GM18951 (cell line): ENCODE measurements at regions of chr1 and their contacts with region 1.

Region 1: DNA sequence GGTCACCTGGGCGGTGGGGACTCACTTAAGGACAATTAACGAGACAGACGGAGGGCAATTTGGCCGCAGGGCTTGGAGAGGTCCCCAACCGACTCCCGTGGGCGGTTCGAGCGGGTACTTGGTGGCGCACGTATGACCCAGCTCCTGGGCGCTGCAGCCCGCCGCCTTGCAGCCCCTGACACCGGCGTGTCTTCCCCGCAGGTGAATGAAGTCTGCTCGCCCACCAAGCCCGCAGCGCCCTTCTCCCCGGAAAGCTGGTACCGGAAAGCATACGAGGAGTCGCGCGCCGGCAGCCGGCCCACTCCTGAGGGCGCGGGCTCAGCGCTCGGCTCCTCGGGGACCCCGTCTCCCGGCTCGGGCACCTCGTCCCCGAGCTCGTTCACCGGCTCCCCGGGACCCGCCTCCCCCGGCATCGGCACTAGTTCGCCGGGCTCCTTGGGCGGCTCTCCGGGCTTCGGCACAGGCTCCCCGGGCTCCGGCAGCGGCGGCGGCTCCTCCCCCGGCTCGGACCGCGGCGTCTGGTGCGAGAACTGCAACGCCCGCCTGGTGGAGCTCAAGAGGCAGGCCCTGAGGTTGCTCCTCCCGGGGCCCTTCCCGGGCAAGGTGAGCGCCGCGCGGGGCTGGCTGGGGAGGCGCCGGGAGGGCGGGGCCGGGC is 1.4 kb downstream of the KIF26B start:
- POLR2A ChIP-seq: no peak

Region 2: DNA sequence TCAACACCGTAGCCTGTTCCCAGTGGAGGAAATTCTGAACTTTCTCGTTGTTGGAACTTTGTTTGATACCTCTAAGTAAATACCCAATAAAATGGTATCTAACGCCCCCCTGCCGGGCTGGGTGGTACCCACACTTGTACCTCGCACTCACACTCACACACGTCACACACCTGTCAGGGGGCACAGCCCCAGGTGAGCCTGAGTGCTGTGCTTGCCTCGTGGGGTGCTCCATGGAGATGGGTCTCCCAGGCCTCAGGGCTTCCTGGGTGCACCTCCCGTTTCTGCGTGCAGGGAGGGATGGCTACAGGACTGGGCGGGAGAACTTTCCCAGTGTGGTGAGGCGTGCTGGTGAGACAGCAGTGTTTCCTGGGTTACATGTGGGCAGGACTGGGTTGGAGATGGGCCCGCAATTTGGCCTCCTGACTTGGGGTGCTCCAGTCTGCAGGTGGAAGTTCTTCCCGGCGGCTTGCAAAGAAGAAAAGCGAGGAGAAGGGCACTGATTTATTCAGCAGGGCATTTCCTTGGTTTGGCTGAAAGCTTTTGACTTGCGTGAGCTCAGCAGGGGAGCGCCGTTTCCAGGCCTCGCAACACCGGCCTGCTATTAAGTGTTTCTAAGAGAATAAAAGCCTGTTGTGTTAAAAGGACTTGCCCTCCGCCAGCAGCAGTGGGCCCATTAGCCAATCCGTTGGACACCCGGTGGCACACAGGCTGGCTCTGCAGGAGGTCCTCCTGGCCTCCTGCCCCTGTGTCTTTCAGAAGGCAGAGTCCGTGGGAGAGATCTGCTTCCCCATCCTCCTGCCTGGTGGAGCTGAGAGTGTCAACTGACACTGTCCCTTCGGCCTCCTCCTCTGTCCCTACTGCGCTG is 78.2 kb after region 1 on chr1:
- in situ Hi-C with region 1: no loop called
- POLR2A ChIP-seq: no peak

Region 3: GRCh38 chr1:246002725-246003441 is 846.7 kb after region 1 on chr1:
- in situ Hi-C with region 1: loop called (anchors 5 kb)
- POLR2A ChIP-seq: no peak

Region 4: GRCh38 chr1:246450611-246451251 is 1294.5 kb after region 1 on chr1:
- in situ Hi-C with region 1: loop called (anchors 25 kb)
- POLR2A ChIP-seq: no peak